ENCODE measurements at regions of chr4 and their contacts with region 1.

Region 1: DNA sequence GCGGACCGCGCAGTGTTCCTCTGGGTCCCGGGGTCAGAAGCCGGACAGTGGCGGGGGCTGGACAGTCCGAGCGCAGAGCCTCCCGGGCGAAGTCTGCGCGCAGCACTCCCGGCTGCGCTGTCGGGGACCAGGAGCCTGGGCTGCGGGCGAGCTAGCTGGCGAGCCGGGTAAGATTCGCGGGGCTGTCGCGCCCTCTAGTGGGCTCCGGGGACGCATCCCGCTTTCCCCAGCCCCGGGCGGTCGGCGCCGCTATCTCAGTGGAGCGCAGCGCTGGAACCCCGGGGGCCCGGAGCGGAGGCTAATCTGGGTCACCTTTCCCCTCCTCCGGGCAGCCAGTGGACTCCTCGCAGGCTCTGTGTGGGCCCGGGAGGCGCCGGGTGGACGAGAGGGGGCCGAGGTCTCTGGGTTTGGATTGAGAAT is 4.2 kb downstream of the PDGFRA start:
- DNase-seq: peak; percentile 91
- ATAC-seq: peak; percentile 81

Region 2: DNA sequence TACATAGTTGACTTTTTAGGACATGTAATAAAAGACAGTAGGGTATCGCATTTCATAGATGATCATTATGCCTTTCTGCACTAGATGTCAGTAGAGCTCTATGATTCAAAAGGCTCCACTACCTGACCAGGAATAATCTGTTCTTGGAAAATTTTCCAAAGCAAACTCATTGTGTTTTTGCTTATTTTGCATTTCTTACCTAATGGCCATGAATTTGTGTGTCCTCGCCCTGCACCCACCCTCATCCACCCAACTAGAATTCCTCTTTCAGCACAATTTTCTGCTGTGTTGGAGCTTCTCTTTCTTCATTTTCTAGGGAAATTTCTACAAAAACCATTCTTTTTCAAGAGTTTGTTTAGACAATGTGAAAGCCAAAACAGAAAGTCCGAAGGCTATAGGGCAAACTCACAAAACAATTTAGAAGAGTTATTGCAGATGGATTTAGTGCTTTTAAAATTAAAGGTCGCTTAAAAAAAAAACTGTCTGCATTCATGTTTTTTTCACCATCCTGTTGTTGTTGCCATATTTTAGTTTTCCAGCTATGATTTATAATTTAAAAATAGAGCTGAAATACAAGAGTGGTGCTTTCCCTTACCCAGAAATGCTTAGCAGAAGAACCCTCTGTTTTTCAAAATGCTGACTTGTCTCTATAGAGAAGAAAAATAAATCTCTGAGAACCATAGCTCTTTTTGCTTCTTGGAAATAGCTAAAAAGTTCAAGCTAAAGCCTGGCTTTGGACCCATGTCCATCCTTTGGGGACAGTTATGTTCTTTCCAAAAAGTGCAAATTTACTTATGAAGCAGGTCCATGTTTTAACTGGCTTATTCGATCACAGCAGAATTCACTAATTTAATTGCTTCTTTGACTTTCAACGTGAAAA is 1998.5 kb before region 1 on chr4:
- intact Hi-C with region 1: loop called (anchors 2 kb)
- DNase-seq: no peak
- ATAC-seq: peak; percentile 92

Region 3: GRCh38 chr4:52712172-52712990 is 1520.9 kb before region 1 on chr4:
- intact Hi-C with region 1: loop called (anchors 10 kb)
- DNase-seq: peak; percentile 98
- ATAC-seq: peak; percentile 99

Region 4: DNA sequence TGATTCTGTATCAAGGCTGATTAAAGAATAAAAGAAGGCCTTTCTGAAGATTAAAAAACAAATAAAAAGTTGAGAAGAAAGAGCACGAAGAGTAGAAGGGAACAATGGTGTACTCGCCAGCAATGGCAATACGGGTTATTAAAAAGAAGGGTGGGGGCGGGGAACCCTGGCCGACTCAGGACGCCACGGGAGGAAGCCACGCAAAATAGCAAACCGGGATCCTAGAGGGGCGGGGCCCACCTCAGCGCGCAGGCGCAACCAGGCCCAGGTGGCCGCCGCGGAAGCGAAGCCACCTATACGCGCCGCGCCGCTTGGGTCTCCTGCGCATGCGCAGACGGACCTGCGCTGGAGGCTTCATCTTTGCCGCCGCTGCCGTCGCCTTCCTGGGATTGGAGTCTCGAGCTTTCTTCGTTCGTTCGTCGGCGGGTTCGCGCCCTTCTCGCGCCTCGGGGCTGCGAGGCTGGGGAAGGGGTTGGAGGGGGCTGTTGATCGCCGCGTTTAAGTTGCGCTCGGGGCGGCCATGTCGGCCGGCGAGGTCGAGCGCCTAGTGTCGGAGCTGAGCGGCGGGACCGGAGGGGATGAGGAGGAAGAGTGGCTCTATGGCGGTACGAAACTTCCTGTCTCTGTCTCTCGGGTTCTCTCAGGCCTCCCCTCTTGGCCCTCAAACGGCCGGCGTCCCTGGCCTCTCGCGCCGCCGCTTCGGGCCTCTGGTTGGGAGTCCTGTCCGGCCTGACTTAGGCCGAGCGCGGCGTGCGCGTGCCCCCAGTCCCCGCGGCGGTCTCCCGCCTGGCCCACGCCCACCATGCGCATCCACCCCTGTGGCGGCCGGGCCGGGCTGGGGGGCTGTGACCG is 855.7 kb before region 1 on chr4 and contains the start of gene FIP1L1:
- intact Hi-C with region 1: loop called (anchors 5 kb)
- DNase-seq: peak; percentile 98
- ATAC-seq: peak; percentile 99
- total RNA-seq, gene FIP1L1: 26.0 TPM

Region 5: GRCh38 chr4:53908661-53909078 is 324.6 kb before region 1 on chr4:
- intact Hi-C with region 1: loop called (anchors 1 kb)
- DNase-seq: no peak
- ATAC-seq: peak; percentile 91

Region 6: GRCh38 chr4:54176202-54176601 is 57.1 kb before region 1 on chr4:
- intact Hi-C with region 1: no loop called
- DNase-seq: no peak
- ATAC-seq: no peak

Measured in Right ventricle myocardium inferior (tissue), 1 donor.